GM12878 (cell line): ENCODE measurements at regions of chr6 and their contacts with region 1.

Region 1: DNA sequence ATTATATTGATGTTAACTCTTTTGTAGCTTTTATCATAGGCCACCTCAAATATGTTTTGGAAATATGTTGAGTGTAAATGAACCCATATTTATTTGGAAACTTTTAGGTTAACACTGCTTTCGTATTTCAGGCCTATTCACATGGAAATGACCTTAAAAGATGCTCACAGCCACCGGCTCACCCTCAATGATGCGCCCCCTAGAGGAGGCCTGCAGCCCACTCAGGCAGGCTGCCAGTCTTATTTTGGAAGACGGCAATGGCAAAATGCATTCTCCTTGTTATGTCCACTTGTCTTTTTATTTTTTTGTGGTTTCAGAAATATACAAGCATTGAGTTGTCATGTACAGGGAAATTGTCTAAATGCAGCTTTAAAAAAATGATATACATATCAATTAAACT is 869.7 kb downstream of the PHF3 start:
- DNase-seq: no peak
- ATAC-seq: peak; percentile 85
- H3K4me3 ChIP-seq: no peak overlapping the region
- H3K27ac ChIP-seq: no peak overlapping the region
- H3K4me1 ChIP-seq: no peaks in the 10 kb centered on the region
- H3K27me3 ChIP-seq: no peaks in the 10 kb centered on the region
- CTCF ChIP-seq: peak; percentile 50 to 78 (median 55)
- EP300 ChIP-seq: no peak
- POLR2A ChIP-seq: no peak
- RAD21 ChIP-seq: peak; percentile 43

Region 2: DNA sequence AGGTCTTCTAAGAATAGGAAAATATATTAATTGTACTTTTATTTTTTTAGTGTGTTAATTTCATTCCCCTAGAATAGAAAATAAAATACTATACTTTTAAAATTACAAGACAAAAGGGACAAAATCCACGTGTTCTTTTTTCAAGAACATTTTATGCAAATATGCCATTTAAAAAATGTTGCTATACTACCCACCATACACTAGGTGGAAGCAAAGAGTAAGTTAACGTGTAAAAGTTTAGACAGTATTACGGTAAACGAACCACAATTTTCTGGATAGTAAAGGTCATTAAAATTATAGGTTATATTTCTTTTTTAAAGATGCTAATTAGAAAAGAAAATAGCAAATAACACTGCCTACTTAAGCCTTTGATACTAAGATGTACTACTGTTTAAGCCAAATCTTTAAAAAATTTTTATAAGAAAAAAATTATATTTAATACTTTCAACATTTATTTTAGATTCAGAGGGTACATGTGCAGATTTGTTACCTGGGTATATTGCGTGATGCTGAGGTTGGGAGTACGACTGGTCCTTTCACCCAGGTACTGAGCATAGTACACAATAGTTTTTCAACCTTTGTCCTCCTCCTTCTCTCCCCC is 582.1 kb before region 1 on chr6:
- CTCF ChIA-PET with region 1: no interaction called
- POLR2A ChIA-PET with region 1: no interaction called
- RAD21 ChIA-PET with region 1: no interaction called
- SMC1A ChIA-PET with region 1: interaction called, 3 read pairs
- in situ Hi-C with region 1: no loop called
- intact Hi-C with region 1: loop called (anchors 2 kb)
- DNase-seq: no peak
- ATAC-seq: peak; percentile 72
- H3K4me3 ChIP-seq: no peak overlapping the region
- H3K27ac ChIP-seq: no peak overlapping the region
- H3K4me1 ChIP-seq: no peaks in the 10 kb centered on the region
- H3K27me3 ChIP-seq: no peaks in the 10 kb centered on the region
- CTCF ChIP-seq: peak; percentile 44 to 71 (median 46); a peak in 5 of 6 replicates
- EP300 ChIP-seq: no peak
- POLR2A ChIP-seq: no peak
- RAD21 ChIP-seq: peak; percentile 75

Region 3: DNA sequence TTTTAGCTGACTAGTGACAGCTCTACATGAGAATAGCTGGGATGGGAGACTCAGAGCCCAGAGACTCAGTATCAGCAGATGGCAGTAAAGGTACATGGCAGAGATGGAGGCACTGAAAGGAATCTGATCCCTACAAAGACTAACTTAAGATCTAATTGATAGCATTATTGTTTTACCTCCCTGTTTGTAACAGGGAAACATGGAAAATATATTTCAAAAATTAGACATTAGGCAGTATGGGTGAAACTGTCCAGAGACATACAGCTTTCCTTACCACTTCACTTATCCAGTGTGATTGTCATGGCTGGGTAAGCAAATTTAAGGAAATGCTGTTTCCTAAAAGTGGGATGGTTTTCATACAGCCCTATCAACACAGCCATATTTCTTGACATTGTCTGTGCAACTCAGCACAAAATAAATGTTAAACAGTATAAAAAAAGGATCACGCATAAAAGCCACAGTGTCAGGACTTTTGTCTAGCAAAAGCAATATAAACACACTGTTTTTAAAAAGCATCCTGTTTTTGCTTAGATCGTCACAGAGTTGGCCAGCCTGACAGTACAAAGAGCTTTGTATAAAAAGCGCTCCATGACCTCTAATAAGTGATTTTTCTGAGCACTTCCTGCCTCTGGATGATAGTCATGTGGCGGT is 492.8 kb before region 1 on chr6:
- CTCF ChIA-PET with region 1: no interaction called
- POLR2A ChIA-PET with region 1: no interaction called
- RAD21 ChIA-PET with region 1: no interaction called
- SMC1A ChIA-PET with region 1: no interaction called
- in situ Hi-C with region 1: no loop called
- intact Hi-C with region 1: loop called (anchors 5 kb)
- DNase-seq: no peak
- ATAC-seq: peak; percentile 92
- H3K4me3 ChIP-seq: no peak overlapping the region
- H3K27ac ChIP-seq: no peak overlapping the region
- H3K4me1 ChIP-seq: no peaks in the 10 kb centered on the region
- H3K27me3 ChIP-seq: no peaks in the 10 kb centered on the region
- CTCF ChIP-seq: peak; percentile 45 to 85 (median 72); a peak in 4 of 6 replicates
- EP300 ChIP-seq: no peak
- POLR2A ChIP-seq: no peak
- RAD21 ChIP-seq: peak; percentile 93